ENCODE measurements at regions of chr19 and their contacts with region 1.

Region 1: DNA sequence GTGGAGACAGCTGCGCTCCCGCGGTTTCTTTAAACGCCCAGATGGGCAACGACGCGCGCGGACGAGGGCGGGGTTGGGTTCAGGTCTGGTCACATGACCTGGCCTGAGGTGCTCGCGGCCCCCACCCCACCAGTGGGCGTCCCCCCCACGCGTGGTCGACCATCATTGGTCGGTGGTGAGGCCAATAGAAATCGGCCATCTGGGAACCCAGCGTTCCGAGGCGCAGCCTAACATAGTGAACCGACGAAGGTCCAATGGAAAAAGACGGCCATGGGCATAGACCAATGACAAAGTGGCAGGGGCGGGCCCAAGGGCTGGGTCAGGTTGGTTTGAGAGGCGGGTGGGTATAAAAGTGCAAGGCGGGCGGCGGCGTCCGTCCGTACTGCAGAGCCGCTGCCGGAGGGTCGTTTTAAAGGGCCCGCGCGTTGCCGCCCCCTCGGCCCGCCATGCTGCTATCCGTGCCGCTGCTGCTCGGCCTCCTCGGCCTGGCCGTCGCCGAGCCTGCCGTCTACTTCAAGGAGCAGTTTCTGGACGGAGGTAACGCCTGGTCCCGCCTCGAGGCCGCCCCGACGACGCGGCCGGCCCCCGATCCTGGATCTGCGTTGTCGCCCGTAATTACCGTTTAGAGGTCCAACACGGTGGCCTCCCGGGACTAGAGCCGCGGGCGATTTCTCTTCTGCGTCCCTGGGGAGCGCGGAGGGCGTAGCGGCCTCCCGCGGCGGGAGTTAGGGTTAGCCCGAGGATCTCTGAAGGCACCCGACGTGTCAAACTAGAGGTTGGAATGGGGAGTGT is at the start of gene CALR:
- DNase-seq: peak; percentile 100
- H3K4me3 Mint-ChIP-seq: peak within 1 kb of the TSS; percentile 98
- H3K27ac Mint-ChIP-seq: peak within 1 kb of the TSS; percentile 91
- H3K4me1 Mint-ChIP-seq: peaks cover 44% of the 10 kb centered on the region
- H3K27me3 Mint-ChIP-seq: no peaks in the 10 kb centered on the region
- total RNA-seq, gene CALR: 987 and 994 TPM in 2 replicates

Region 2: DNA sequence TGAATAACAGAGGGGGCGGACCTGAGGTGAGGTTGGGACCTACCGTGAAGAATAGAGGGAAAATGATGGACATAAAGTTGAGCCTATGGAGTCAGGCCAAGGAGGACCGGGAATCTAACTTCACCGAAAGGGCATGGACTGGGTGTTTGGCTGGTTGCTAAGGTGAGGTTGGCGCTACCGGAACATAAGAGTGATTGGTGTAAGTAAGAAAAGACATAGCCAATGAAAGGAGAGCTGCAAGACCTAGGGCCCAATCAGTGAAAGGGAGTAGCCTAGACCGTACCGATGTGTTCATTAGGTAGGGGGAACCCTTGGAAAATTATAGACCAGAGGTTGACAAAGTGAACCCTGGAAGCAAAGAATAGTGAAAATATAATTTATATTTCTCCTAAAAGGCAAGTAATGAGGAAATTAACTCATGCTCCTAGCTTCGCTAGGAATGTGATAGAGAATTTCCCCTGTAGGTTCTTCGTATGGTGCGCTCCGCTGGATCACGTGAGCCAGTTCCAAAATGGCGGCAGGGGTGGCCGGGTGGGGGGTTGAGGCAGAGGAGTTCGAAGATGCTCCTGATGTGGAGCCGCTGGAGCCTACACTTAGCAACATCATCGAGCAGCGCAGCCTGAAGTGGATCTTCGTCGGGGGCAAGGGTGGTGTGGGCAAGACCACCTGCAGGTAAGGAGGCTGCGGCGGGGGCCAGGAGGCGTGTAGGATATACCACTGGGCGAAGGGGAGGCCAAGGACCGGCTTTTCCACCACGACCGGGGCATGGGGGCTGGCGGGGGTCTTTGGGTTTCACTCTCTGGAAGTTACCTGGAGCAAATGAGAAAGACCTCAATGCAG is 201.2 kb before region 1 on chr19 and contains the start of gene GET3:
- intact Hi-C with region 1: loop called (anchors 10 kb)
- DNase-seq: peak; percentile 94
- H3K4me3 Mint-ChIP-seq: peak within 1 kb of the TSS; percentile 100
- H3K27ac Mint-ChIP-seq: peak within 1 kb of the TSS; percentile 98
- H3K4me1 Mint-ChIP-seq: peaks cover 38% of the 10 kb centered on the region
- H3K27me3 Mint-ChIP-seq: no peaks in the 10 kb centered on the region
- total RNA-seq, gene GET3: 64.6 and 67.3 TPM in 2 replicates

Region 3: DNA sequence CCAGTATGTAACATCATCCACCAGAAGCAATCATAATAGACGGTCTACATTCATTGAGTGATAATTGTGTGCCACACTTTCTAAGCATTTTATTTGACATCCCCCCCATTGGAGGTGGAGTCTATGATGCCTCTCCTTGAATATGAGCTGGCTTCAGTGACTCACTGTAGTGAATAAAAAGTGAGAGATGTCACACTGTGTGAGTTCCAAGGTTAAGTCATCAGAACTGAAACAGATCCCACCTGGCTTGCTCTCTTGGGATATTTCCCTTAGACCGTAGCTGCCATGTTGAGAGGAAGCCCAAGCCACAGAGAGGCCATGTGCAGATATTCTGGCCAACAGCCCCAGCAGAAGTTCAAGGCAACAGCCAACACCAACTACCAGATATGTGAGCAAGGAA is 116.7 kb before region 1 on chr19:
- intact Hi-C with region 1: no loop called
- DNase-seq: no peak
- H3K4me3 Mint-ChIP-seq: no peak overlapping the region
- H3K27ac Mint-ChIP-seq: no peak overlapping the region
- H3K4me1 Mint-ChIP-seq: peaks cover 11% of the 10 kb centered on the region
- H3K27me3 Mint-ChIP-seq: peaks cover 14% of the 10 kb centered on the region

Region 4: GRCh38 chr19:12890787-12891552 is 47.5 kb before region 1 on chr19 and contains the start of gene GCDH:
- intact Hi-C with region 1: loop called (anchors 1 kb)
- DNase-seq: peak; percentile 98
- H3K4me3 Mint-ChIP-seq: peak within 1 kb of the TSS; percentile 99
- H3K27ac Mint-ChIP-seq: peak within 1 kb of the TSS; percentile 90
- H3K4me1 Mint-ChIP-seq: peaks cover 24% of the 10 kb centered on the region
- H3K27me3 Mint-ChIP-seq: peaks cover 7% of the 10 kb centered on the region
- total RNA-seq, gene GCDH: 66.9 and 71.6 TPM in 2 replicates

Region 5: DNA sequence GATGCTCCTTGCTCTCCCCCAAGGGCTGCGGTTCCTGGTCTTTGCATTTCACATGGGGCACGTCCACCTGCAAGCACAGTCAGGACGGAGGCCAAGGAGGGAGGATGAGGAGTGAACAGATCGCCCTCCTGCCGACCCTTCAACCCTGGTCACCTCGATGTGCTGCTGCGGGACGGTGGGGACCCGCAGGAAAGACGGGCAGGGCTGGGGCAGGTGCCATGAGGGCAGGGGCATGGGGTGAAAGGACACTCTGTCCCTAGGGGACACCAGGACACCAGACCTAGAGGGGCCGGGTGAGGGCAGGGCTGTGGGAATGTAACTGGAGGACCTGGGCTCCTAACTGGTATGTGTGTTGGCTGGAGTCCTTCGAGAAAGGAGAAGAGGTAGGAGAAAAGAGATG is 20.2 kb before region 1 on chr19:
- intact Hi-C with region 1: loop called (anchors 2 kb)
- DNase-seq: no peak
- H3K4me3 Mint-ChIP-seq: peak overlapping the region; percentile 80
- H3K27ac Mint-ChIP-seq: peak overlapping the region; percentile 95
- H3K4me1 Mint-ChIP-seq: peaks cover 30% of the 10 kb centered on the region
- H3K27me3 Mint-ChIP-seq: peaks cover 2% of the 10 kb centered on the region

Region 6: GRCh38 chr19:12974301-12975220 is 36.1 kb after region 1 on chr19:
- intact Hi-C with region 1: no loop called
- DNase-seq: no peak
- H3K4me3 Mint-ChIP-seq: no peak overlapping the region
- H3K27ac Mint-ChIP-seq: no peak overlapping the region
- H3K4me1 Mint-ChIP-seq: peaks cover 8% of the 10 kb centered on the region
- H3K27me3 Mint-ChIP-seq: peaks cover 12% of the 10 kb centered on the region

Region 7: GRCh38 chr19:13012690-13013608 is 74.5 kb after region 1 on chr19:
- intact Hi-C with region 1: no loop called
- DNase-seq: peak; percentile 76
- H3K4me3 Mint-ChIP-seq: peak overlapping the region; percentile 76
- H3K27ac Mint-ChIP-seq: peak overlapping the region; percentile 67
- H3K4me1 Mint-ChIP-seq: peaks cover 15% of the 10 kb centered on the region
- H3K27me3 Mint-ChIP-seq: peaks cover 75% of the 10 kb centered on the region

Region 8: GRCh38 chr19:13155472-13156359 is 217.3 kb after region 1 on chr19:
- intact Hi-C with region 1: loop called (anchors 1 kb)
- DNase-seq: peak; percentile 95
- H3K4me3 Mint-ChIP-seq: peak overlapping the region; percentile 100
- H3K27ac Mint-ChIP-seq: peak overlapping the region; percentile 99
- H3K4me1 Mint-ChIP-seq: peaks cover 44% of the 10 kb centered on the region
- H3K27me3 Mint-ChIP-seq: peaks cover 2% of the 10 kb centered on the region

Region 9: GRCh38 chr19:14419106-14419813 is 1480.8 kb after region 1 on chr19 and contains the start of gene DDX39A:
- intact Hi-C with region 1: loop called (anchors 10 kb)
- DNase-seq: peak; percentile 99
- H3K4me3 Mint-ChIP-seq: peak within 1 kb of the TSS; percentile 97
- H3K27ac Mint-ChIP-seq: peak within 1 kb of the TSS; percentile 99
- H3K4me1 Mint-ChIP-seq: peaks cover 28% of the 10 kb centered on the region
- H3K27me3 Mint-ChIP-seq: peaks cover 3% of the 10 kb centered on the region
- total RNA-seq, gene DDX39A: 274 and 280 TPM in 2 replicates

Measured in activated CD4-positive, alpha-beta T cell treated with anti-CD3 and anti-CD28 coated beads, Interleukin-2, amount 10 ng/mL, durations not matched to agents 24 days and 14 days (primary cell).